ENCODE measurements at regions of chr7 and their contacts with region 1.

Region 1: GRCh38 chr7:88835147-88835728 is 39.7 kb upstream of the TEX47 start:
- DNase-seq: no peak
- H3K4me3 Mint-ChIP-seq: no peak overlapping the region
- H3K27ac Mint-ChIP-seq: no peak overlapping the region
- H3K4me1 Mint-ChIP-seq: no peaks in the 10 kb centered on the region
- H3K27me3 Mint-ChIP-seq: peaks cover 1% of the 10 kb centered on the region

Region 2: DNA sequence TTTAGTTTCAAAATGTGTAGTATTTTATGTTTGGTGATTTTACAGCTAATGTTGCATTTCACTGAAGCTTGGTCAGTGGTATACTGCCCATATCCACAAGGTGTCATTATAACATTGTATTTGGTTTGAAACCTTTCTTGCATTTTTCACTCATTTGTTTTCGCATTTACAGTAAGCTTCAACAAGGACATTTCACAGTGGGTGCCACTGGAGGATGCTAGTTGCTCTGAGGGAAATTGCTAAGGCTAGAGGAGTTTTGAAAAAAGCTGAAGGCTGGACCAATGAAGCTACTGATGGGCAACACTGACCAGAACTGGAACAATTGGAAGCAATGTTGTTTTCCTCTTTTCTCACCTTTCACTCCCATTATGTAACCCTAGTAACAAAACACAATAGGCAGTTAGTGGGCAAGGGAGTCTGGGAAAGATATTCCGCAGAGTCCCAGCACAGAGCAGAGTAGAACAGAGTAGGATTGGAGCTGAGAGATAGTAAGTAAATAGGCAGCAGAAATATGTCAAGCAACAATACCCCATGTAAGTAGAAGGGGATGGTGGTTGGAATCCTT is 591.8 kb before region 1 on chr7:
- intact Hi-C with region 1: loop called (anchors 5 kb)
- DNase-seq: no peak
- H3K4me3 Mint-ChIP-seq: no peak overlapping the region
- H3K27ac Mint-ChIP-seq: no peak overlapping the region
- H3K4me1 Mint-ChIP-seq: no peaks in the 10 kb centered on the region
- H3K27me3 Mint-ChIP-seq: peaks cover 11% of the 10 kb centered on the region

Region 3: DNA sequence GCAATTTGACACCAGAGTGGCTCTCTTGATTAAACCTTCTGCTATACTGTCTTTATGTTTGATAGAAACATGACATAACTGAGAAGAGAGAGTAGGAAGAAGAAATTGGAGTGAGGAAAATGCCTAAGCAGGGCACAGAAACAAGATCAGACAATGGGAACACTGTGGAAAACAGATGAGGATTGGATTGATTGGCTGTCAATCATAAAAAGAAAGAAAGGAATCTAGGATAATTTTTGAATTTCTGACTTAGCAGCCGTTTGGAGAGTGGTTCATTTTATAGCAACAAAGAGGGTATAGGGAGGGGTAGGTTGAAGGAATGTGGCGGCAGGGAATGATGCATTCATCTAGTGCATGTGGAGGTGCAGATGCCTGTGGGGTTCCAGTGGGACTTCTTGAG is 47.5 kb before region 1 on chr7:
- intact Hi-C with region 1: no loop called
- DNase-seq: no peak
- H3K4me3 Mint-ChIP-seq: no peak overlapping the region
- H3K27ac Mint-ChIP-seq: no peak overlapping the region
- H3K4me1 Mint-ChIP-seq: no peaks in the 10 kb centered on the region
- H3K27me3 Mint-ChIP-seq: peaks cover 2% of the 10 kb centered on the region

Measured in activated T-helper 1 cell treated with anti-CD3 and anti-CD28 coated beads, Interleukin-12 subunit alpha, Interleukin-12 subunit beta, Interleukin-2, Interleukin-4 antibody, amounts not matched to agents 30 ng/mL and 10 ng/mL and 1 ng/mL, durations not matched to agents 14 hours and 24 hours and 36 hours (primary cell).